Activated naive CD4-positive, alpha-beta T cell treated with anti-CD3 and anti-CD28 coated beads for 36 hours (primary cell): ENCODE measurements at regions of chr11 and their contacts with region 1.

Region 1: DNA sequence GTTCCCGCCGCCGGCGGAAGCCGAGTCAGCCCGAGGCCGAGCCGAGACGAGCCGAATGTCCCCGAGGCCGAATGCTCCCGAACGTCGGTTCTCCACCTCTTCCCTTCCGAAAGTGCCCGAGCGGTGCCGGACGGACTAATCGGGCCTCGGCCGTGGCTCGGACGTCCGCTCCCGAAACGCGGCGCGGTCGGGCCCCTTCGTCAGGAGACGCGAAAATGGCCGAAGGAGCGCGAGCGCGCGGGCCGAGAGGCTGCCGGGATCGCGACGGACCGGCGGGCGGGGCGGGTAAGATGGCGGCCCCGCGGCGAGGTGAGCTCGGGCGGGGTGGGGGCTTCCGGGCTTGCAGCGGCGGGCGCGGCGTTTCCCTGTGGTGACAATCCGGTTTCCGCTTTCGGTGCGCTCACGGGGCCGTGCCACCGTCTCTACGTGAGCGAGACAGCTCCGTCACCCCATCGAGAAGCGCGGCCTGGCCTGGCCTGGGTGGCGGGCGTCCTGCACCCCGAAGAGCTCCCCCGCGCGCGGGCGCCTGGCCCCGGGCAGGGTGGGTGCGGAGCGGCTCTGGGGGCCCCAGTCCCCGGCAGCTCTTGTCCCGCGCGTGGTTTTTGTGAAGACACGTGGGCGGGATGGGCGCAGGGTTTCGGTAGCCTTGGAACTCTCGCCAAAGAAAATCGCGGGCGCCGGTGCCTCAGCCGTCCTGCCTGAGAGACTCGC is at the start of gene TMEM80:
- DNase-seq: peak; percentile 99
- H3K4me3 Mint-ChIP-seq: peak within 1 kb of the TSS; percentile 83
- H3K27ac Mint-ChIP-seq: peak within 1 kb of the TSS; percentile 93
- H3K4me1 Mint-ChIP-seq: peaks cover 54% of the 10 kb centered on the region
- H3K27me3 Mint-ChIP-seq: no peaks in the 10 kb centered on the region
- total RNA-seq, gene TMEM80: 5.6 to 6.0 TPM

Region 2: GRCh38 chr11:560305-561147 is 135.2 kb before region 1 on chr11 and contains the starts of genes LMNTD2 and RASSF7:
- CTCF ChIA-PET with region 1: no interaction called
- intact Hi-C with region 1: loop called (anchors 2 kb)
- DNase-seq: peak; percentile 95
- H3K4me3 Mint-ChIP-seq: peak within 1 kb of the TSS; percentile 84
- H3K27ac Mint-ChIP-seq: peak within 1 kb of the TSS; percentile 76
- H3K4me1 Mint-ChIP-seq: peaks cover 12% of the 10 kb centered on the region
- H3K27me3 Mint-ChIP-seq: peaks cover 3% of the 10 kb centered on the region
- total RNA-seq, gene LMNTD2: 4.5 to 5.2 TPM
- total RNA-seq, gene RASSF7: 8.3 to 9.9 TPM

Region 3: DNA sequence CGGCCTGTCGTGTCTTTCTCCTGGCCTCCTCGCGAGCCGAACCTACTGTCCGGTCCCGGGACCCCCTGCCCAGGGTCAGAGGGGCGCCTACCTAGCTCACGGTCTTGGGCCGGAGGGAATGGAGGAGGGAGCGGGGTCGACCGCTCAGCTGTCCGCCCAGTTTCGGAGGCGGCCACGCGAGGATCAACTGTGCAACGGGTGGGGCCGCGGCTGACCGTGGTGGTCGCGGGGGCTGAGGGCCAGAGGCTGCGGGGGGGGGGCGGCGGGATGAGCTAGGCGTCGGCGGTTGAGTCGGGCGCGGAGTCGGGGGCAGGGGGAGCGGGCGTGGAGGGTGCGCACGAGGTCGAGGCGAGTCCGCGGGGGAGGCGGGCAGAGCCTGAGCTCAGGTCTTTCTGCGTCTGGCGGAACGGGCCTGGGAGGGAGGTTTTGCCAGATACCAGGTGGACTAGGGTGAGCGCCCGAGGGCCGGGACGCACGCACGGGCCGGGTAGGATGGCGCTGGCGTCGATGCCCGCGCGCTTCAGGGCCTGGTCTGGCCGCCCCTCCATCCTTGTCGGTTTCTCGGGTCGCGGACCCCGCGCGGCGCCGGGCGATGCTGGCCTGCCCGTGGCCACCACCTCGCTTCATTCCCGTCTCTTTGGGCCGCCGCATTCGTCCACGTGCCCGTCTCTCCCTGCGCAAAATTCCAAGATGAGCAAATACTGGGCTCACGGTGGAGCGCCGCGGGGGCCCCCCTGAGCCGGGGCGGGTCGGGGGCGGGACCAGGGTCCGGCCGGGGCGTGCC is 59.0 kb before region 1 on chr11:
- CTCF ChIA-PET with region 1: no interaction called
- intact Hi-C with region 1: no loop called
- DNase-seq: no peak
- H3K4me3 Mint-ChIP-seq: no peak overlapping the region
- H3K27ac Mint-ChIP-seq: no peak overlapping the region
- H3K4me1 Mint-ChIP-seq: peaks cover 19% of the 10 kb centered on the region
- H3K27me3 Mint-ChIP-seq: peaks cover 25% of the 10 kb centered on the region

Region 4: DNA sequence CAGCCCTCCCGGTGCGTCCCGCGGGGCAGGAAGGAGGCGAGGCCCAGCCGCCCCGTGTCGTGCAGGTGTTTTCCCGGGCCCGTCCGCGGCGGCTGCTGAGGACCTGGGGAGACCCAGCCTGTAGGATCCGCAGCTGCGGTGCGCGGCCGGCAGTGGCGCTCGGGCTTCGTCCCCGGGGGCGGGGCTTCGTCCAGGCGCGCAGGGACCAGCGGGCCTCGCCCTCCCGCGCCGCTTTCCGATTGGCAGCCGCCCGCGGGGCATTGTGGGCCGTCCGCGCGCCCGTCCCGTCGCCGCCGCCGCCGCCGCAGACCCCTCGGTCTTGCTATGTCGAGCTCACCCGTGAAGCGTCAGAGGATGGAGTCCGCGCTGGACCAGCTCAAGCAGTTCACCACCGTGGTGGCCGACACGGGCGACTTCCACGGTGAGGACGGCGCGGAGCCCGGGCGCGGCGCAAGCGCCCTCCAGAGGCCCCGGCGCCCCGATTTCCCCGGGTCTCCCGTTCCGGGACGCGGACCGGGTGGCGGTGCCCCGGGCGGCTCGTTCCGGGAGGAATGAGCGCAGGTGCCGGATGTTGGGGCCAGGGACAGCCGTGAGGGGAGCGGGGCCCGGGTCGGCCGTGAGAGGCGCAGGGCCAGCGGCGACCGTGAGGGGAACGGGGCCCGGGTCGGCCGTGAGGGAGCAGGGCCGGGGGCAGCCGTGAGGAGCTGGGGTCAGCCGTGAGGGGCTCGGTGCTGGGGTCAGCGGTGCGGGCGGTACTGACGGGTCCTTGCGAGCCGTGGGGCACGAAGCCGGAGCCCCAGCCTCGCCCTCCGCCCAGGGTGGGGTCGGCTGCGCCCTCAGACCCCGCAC is 51.7 kb after region 1 on chr11 and contains the start of gene TALDO1:
- CTCF ChIA-PET with region 1: no interaction called
- intact Hi-C with region 1: loop called (anchors 1 kb)
- DNase-seq: peak; percentile 86
- H3K4me3 Mint-ChIP-seq: peak within 1 kb of the TSS; percentile 84
- H3K27ac Mint-ChIP-seq: peak within 1 kb of the TSS; percentile 83
- H3K4me1 Mint-ChIP-seq: peaks cover 21% of the 10 kb centered on the region
- H3K27me3 Mint-ChIP-seq: no peaks in the 10 kb centered on the region
- total RNA-seq, gene TALDO1: 327 to 360 TPM